Activated CD8-positive, alpha-beta memory T cell treated with anti-CD3 and anti-CD28 coated beads, Interleukin-2, amount 10 ng/mL, durations not matched to agents 7 days and 5 days (primary cell): ENCODE measurements at regions of chr12 and their contacts with region 1.

Region 1: GRCh38 chr12:56987551-56988053 is 18.7 kb downstream of the ZBTB39 start:
- DNase-seq: peak; percentile 80
- ATAC-seq: peak; percentile 78
- H3K4me3 Mint-ChIP-seq: no peak overlapping the region
- H3K27ac Mint-ChIP-seq: no peak overlapping the region
- H3K4me1 Mint-ChIP-seq: peaks cover 20% of the 10 kb centered on the region
- H3K27me3 Mint-ChIP-seq: peaks cover 10% of the 10 kb centered on the region

Region 2: DNA sequence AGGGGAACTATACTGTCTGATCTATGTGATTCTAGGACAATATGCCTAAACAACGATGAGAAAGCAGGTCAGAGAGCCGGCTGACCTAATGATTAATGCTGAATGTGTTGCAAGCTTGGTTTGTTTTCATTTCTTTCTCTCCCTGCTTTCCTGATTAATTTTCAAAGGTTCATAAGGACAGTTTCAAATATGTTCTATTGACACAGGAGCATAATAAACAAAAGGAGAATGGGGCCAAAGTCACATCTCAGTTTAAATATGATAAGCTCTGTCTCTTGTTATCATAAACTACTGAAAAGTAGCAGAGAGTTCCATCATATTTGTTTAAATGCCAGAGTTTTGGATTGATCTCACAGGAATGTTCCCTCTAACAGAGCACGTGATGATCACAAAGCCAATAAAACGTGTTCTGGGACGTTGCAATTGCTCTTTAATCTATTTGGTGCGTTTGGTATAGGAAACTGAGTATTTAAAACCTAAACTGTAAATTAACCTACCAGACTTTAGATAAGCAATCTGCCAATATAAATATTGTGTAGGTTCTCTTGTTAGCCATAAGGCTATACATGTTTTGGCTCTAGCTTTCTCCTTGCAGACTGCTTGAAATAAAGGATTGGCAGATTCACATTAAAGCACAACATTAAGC is 228.2 kb before region 1 on chr12:
- CTCF ChIA-PET with region 1: interaction called, 63 read pairs
- DNase-seq: no peak
- ATAC-seq: no peak
- H3K4me3 Mint-ChIP-seq: no peak overlapping the region
- H3K27ac Mint-ChIP-seq: no peak overlapping the region
- H3K4me1 Mint-ChIP-seq: peaks cover 11% of the 10 kb centered on the region
- H3K27me3 Mint-ChIP-seq: peaks cover 2% of the 10 kb centered on the region

Region 3: DNA sequence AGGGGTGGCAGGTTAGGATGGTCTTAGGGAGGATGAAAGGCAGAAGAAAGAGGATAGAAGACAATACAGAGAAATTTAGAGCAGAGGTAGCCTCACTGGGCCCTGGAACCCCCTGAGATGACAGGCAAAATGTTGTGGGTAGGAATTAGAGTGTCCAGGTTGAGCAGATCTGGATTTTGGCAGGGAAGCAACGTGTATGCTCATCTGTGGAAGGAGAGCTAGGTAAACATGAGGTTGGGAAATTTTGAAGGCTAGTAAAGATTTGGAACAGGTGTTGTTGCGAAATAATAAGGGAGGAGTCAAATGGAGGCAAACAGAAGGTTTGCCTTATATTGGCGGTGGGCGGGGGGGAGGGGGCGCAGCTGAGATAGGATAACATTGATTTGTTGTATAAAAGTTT is 219.2 kb before region 1 on chr12:
- CTCF ChIA-PET with region 1: interaction called, 11 read pairs
- DNase-seq: no peak
- ATAC-seq: no peak
- H3K4me3 Mint-ChIP-seq: no peak overlapping the region
- H3K27ac Mint-ChIP-seq: no peak overlapping the region
- H3K4me1 Mint-ChIP-seq: no peaks in the 10 kb centered on the region
- H3K27me3 Mint-ChIP-seq: no peaks in the 10 kb centered on the region

Region 4: DNA sequence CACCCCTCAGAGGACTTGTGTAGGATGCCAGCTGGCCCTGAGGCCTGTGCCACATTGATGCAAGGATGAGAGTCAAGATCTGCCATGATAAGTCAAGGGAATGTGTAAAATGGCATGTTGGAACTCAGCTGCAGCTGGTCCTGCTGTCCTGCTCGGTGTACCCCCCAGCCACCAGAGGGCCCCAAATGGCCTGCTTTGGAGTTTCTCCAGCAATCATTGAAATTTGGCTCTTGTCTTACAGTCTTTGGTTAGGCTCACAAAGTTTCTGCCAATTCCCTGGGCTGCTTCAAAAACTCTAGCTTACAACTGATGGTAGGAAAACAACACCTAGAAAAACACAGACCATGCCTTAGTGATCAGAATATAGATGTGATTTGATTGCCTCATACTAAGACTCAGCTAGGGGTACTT is 147.7 kb before region 1 on chr12:
- CTCF ChIA-PET with region 1: interaction called, 19 read pairs
- DNase-seq: peak; percentile 65
- ATAC-seq: peak; percentile 53
- H3K4me3 Mint-ChIP-seq: no peak overlapping the region
- H3K27ac Mint-ChIP-seq: no peak overlapping the region
- H3K4me1 Mint-ChIP-seq: peaks cover 13% of the 10 kb centered on the region
- H3K27me3 Mint-ChIP-seq: peaks cover 4% of the 10 kb centered on the region

Region 5: DNA sequence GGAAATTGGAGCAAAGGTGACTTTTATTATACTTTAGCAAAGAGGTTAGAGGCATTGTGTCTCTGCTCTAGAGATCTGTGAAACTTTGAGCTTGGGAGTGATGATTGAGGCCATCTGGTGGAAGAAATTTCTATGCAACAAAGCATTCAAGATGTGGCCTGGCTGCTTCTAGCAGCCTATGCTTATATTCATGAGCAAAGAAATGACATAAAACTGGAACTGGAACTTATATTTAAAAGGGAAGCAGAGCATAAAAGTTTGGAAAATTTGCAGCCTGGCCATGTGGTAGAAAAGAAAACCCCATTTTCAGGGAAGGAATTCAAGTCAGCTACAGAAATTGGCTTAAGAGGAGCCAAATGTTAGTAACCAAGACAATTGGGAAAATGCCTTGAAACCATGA is 123.8 kb before region 1 on chr12:
- CTCF ChIA-PET with region 1: no interaction called
- DNase-seq: no peak
- ATAC-seq: no peak
- H3K4me3 Mint-ChIP-seq: no peak overlapping the region
- H3K27ac Mint-ChIP-seq: no peak overlapping the region
- H3K4me1 Mint-ChIP-seq: no peaks in the 10 kb centered on the region
- H3K27me3 Mint-ChIP-seq: peaks cover 2% of the 10 kb centered on the region

Region 6: GRCh38 chr12:56998981-56999380 is 11.4 kb after region 1 on chr12:
- CTCF ChIA-PET with region 1: interaction called, 55 read pairs
- DNase-seq: peak; percentile 77
- ATAC-seq: peak; percentile 88
- H3K4me3 Mint-ChIP-seq: peak overlapping the region; percentile 22
- H3K27ac Mint-ChIP-seq: peak overlapping the region; percentile 87
- H3K4me1 Mint-ChIP-seq: peaks cover 37% of the 10 kb centered on the region
- H3K27me3 Mint-ChIP-seq: no peaks in the 10 kb centered on the region